A673 (cell line): ENCODE measurements at regions of chr3 and their contacts with region 1.

Region 1: GRCh38 chr3:130787422-130788068 is 40.9 kb upstream of the PIK3R4 start:
- DNase-seq: no peak
- H3K4me3 ChIP-seq: no peak overlapping the region
- H3K27ac ChIP-seq: no peak overlapping the region
- H3K4me1 ChIP-seq: peaks cover 7% of the 10 kb centered on the region
- H3K27me3 ChIP-seq: no peaks in the 10 kb centered on the region
- CTCF ChIP-seq: no peak

Region 2: GRCh38 chr3:129077222-129077621 is 1710.3 kb before region 1 on chr3:
- CTCF ChIA-PET with region 1: no interaction called
- POLR2A ChIA-PET with region 1: interaction called, 10 read pairs
- intact Hi-C with region 1: no loop called
- DNase-seq: no peak
- H3K4me3 ChIP-seq: no peak overlapping the region
- H3K27ac ChIP-seq: no peak overlapping the region
- H3K4me1 ChIP-seq: no peaks in the 10 kb centered on the region
- H3K27me3 ChIP-seq: no peaks in the 10 kb centered on the region
- CTCF ChIP-seq: no peak

Region 3: GRCh38 chr3:130490241-130490640 is 297.3 kb before region 1 on chr3:
- CTCF ChIA-PET with region 1: no interaction called
- POLR2A ChIA-PET with region 1: no interaction called
- intact Hi-C with region 1: no loop called
- DNase-seq: no peak
- H3K4me3 ChIP-seq: no peak overlapping the region
- H3K27ac ChIP-seq: no peak overlapping the region
- H3K4me1 ChIP-seq: no peaks in the 10 kb centered on the region
- H3K27me3 ChIP-seq: peaks cover 4% of the 10 kb centered on the region
- CTCF ChIP-seq: no peak